ENCODE measurements at regions of chr11 and their contacts with region 1.

Region 1: GRCh38 chr11:47552566-47553416 is at the start of gene CELF1:
- DNase-seq: peak; percentile 93 to 96 (median 94)
- ATAC-seq: peak; percentile 94 to 99 (median 98)
- H3K4me3 ChIP-seq: peak within 1 kb of the TSS; percentile 68 to 100 (median 90)
- H3K27ac ChIP-seq: peak within 1 kb of the TSS; percentile 81 to 96 (median 91)
- H3K4me1 ChIP-seq: peaks cover 6 to 49% (median 26%) of the 10 kb centered on the region in 12 donors
- H3K27me3 ChIP-seq: no peaks in the 10 kb centered on the region
- CTCF ChIP-seq: peak; percentile 81 to 98 (median 97)
- POLR2A ChIP-seq: peak in 1 of 2 donors; percentile 54
- total RNA-seq, gene CELF1: 63.3 to 111 (median 88.6) TPM

Region 2: GRCh38 chr11:46948378-46949131 is 604.2 kb before region 1 on chr11:
- intact Hi-C with region 1: no loop called
- DNase-seq: no peak
- ATAC-seq: no peak
- H3K4me3 ChIP-seq: no peak overlapping the region
- H3K27ac ChIP-seq: peak overlapping the region in 1 of 12 donors; percentile 41
- H3K4me1 ChIP-seq: peaks cover 0 to 4% (median 0%) of the 10 kb centered on the region in 12 donors
- H3K27me3 ChIP-seq: no peaks in the 10 kb centered on the region
- CTCF ChIP-seq: no peak
- POLR2A ChIP-seq: no peak

Region 3: DNA sequence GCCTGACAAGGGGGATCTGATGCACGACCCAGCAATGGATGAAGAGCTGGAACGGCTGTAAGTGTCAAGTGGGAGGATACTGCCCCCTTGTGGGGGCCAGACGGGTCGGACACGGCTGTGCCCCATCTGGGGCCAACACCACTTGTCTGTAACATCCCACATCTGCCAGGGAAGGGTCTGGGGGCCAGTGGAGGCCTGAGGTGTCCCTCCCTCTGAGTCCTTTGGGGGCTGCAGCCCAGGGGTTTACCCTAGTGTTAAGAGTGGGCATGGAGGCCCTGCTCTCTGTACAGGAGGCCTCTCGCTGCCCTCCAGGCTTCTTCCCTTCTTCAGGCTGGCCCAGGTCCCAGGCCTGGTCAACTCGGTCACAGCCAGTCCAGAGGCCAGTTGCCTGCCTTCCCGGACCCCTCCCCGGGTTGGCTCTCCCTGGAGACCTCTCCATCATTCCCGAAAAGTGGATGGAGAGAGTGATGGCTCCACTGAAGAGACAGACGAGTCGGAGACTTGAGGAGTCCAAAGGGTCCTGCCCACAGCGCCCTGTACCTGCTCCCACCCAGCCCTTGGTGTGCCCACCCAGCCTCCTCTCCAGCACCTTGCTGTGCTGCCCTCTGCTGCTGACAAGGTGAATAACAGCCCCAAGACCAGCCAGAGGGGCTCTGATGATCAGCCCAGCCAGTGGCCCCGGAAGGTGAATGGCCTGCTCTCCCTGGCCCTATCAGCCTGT is 391.5 kb before region 1 on chr11:
- intact Hi-C with region 1: no loop called
- DNase-seq: peak; percentile 46 to 74 (median 59)
- ATAC-seq: peak; percentile 53 to 73 (median 68)
- H3K4me3 ChIP-seq: no peak overlapping the region
- H3K27ac ChIP-seq: no peak overlapping the region
- H3K4me1 ChIP-seq: peaks cover 0 to 30% (median 6%) of the 10 kb centered on the region in 12 donors
- H3K27me3 ChIP-seq: no peaks in the 10 kb centered on the region
- CTCF ChIP-seq: peak; percentile 48 to 68 (median 56)
- POLR2A ChIP-seq: no peak

Region 4: GRCh38 chr11:47466701-47467250 is 86.0 kb before region 1 on chr11:
- intact Hi-C with region 1: loop called in 1 of 10 experiments (anchors 5 kb)
- DNase-seq: peak in 4 of 5 donors; percentile 30 to 62 (median 56)
- ATAC-seq: peak; percentile 32 to 70 (median 63)
- H3K4me3 ChIP-seq: peak overlapping the region in 3 of 12 donors; percentile 5 to 28 (median 7)
- H3K27ac ChIP-seq: peak overlapping the region; percentile 41 to 79 (median 60)
- H3K4me1 ChIP-seq: peaks cover 3 to 49% (median 31%) of the 10 kb centered on the region in 12 donors
- H3K27me3 ChIP-seq: no peaks in the 10 kb centered on the region
- CTCF ChIP-seq: no peak
- POLR2A ChIP-seq: no peak

Region 5: GRCh38 chr11:47499614-47500013 is 53.2 kb before region 1 on chr11:
- intact Hi-C with region 1: loop called in 5 of 10 experiments (anchors 5 to 10 kb)
- DNase-seq: peak in 2 of 5 donors; percentile 37 to 56
- ATAC-seq: peak in 3 of 4 donors; percentile 40 to 67 (median 66)
- H3K4me3 ChIP-seq: peak overlapping the region in 2 of 12 donors; percentile 1 to 25
- H3K27ac ChIP-seq: peak overlapping the region in 3 of 12 donors; percentile 9 to 84 (median 28)
- H3K4me1 ChIP-seq: peaks cover 4 to 83% (median 57%) of the 10 kb centered on the region in 12 donors
- H3K27me3 ChIP-seq: no peaks in the 10 kb centered on the region
- CTCF ChIP-seq: no peak
- POLR2A ChIP-seq: no peak

Region 6: DNA sequence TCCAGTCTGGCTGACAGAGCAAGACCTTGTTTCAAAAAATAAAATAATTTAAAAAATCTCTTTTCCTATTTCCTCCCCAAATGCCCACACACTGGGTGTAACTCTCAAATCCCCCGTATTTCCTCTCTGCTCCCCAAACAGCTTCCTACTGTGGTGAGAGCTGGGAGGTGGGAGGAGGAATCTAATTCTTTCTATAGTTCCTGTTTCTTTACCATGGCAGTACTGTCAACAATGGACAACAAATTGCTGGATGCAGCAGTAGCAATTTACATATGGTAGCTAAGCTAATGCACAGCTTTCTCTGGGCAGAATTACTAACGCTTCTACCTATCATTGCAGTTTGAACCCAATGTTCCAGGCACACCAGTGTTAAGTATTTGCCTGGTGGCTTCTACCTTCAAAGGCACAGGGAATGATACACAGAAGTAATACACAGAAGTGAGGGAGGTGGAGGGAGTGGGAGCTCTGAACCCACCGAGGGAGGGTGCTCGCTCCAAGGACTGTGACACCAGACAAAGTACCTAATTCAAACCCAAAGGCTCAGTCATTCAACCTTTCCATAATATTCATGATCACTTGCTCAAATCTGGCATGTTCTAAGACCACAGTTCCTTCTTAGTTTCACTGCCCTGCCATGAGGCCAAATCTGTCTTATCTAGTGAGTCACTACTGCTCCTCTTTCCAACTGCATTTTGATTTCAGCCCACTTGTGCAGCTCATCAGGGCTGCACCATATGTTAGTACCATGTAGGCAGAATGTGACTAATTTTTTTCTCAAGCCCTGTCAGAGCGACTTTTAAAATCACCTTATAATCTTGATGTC is 37.8 kb before region 1 on chr11:
- intact Hi-C with region 1: loop called in 1 of 10 experiments (anchors 5 kb)
- DNase-seq: peak in 1 of 5 donors; percentile 20
- ATAC-seq: peak in 3 of 4 donors; percentile 66 to 78 (median 66)
- H3K4me3 ChIP-seq: no peak overlapping the region
- H3K27ac ChIP-seq: peak overlapping the region in 5 of 12 donors; percentile 29 to 83 (median 32)
- H3K4me1 ChIP-seq: peaks cover 10 to 97% (median 81%) of the 10 kb centered on the region in 12 donors
- H3K27me3 ChIP-seq: no peaks in the 10 kb centered on the region
- CTCF ChIP-seq: no peak
- POLR2A ChIP-seq: no peak